Natural killer cell (primary cell): ENCODE measurements at regions of chr6 and their contacts with region 1.

Region 1: GRCh38 chr6:111614833-111615582 is 9.3 kb upstream of the TRAF3IP2 start:
- DNase-seq: no peak
- ATAC-seq: no peak
- H3K4me3 ChIP-seq: no peak overlapping the region
- H3K4me3 Mint-ChIP-seq: no peak overlapping the region
- H3K27ac ChIP-seq: no peak overlapping the region
- H3K27ac Mint-ChIP-seq: no peak overlapping the region
- H3K4me1 ChIP-seq: no peaks in the 10 kb centered on the region
- H3K4me1 Mint-ChIP-seq: no peaks in the 10 kb centered on the region
- H3K27me3 ChIP-seq: no peaks in the 10 kb centered on the region
- H3K27me3 Mint-ChIP-seq: peaks cover 6 to 12% of the 10 kb centered on the region in 2 donors
- CTCF ChIP-seq: no peak

Region 2: GRCh38 chr6:111642463-111643158 is 27.6 kb after region 1 on chr6:
- intact Hi-C with region 1: loop called (anchors 2 kb)
- DNase-seq: peak in 1 of 2 donors; percentile 45
- ATAC-seq: peak; percentile 51 to 70 (median 54)
- H3K4me3 ChIP-seq: no peak overlapping the region
- H3K4me3 Mint-ChIP-seq: no peak overlapping the region
- H3K27ac ChIP-seq: no peak overlapping the region
- H3K27ac Mint-ChIP-seq: no peak overlapping the region
- H3K4me1 ChIP-seq: no peaks in the 10 kb centered on the region
- H3K4me1 Mint-ChIP-seq: no peaks in the 10 kb centered on the region
- H3K27me3 ChIP-seq: no peaks in the 10 kb centered on the region
- H3K27me3 Mint-ChIP-seq: no peaks in the 10 kb centered on the region
- CTCF ChIP-seq: no peak